A673 (cell line): ENCODE measurements at regions of chr3 and their contacts with region 1.

Region 1: GRCh38 chr3:114362815-114363214 is 69.0 kb downstream of the TIGIT start:
- DNase-seq: peak; percentile 69
- H3K4me3 ChIP-seq: no peak overlapping the region
- H3K27ac ChIP-seq: no peak overlapping the region
- H3K4me1 ChIP-seq: peaks cover 12% of the 10 kb centered on the region
- H3K27me3 ChIP-seq: no peaks in the 10 kb centered on the region
- CTCF ChIP-seq: peak; percentile 71

Region 2: DNA sequence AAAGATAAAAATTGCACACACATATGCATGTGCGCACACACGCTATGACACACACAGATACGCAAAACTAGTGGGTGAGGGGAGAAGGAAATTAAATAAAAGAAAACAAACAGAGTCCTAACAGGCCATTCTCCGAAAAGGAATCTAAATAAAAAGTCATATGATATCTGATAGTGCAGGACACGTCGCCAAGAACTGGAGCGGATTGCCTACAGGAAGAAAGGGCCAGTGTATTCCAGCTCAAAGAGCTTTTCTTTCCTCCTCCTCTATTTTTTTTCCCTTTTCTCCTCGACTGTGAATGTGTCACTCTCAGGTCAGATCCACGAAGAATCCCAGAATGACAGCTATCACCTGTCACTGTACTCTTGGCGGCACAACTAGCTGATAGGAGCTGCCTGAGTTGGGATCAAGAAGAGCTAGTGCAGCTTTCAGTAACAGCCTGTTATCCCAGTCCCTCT is 88.8 kb after region 1 on chr3:
- CTCF ChIA-PET with region 1: interaction called, 3 read pairs
- POLR2A ChIA-PET with region 1: no interaction called
- intact Hi-C with region 1: loop called (anchors 5 kb)
- DNase-seq: no peak
- H3K4me3 ChIP-seq: peak overlapping the region; percentile 58
- H3K27ac ChIP-seq: peak overlapping the region; percentile 83
- H3K4me1 ChIP-seq: peaks cover 67% of the 10 kb centered on the region
- H3K27me3 ChIP-seq: no peaks in the 10 kb centered on the region
- CTCF ChIP-seq: no peak

Region 3: DNA sequence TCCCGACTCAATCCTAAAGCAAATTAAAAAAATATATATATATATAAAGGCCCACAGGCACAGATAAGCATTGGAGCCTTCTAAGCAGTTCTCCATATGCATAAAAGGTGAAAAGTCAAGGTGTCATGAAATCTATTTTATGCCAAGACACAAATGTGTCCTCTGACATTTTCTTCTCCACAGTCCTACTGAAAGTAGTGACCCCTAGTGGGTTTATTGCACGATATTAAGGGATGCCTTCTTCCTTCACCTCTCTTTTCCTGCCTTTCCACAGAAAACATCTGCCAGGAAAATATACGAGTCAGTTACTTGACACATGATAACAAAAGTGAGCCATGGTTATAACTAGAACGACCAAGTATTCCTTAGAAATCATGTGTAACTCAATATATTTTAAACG is 234.2 kb after region 1 on chr3:
- CTCF ChIA-PET with region 1: no interaction called
- POLR2A ChIA-PET with region 1: no interaction called
- intact Hi-C with region 1: loop called (anchors 10 kb)
- DNase-seq: peak; percentile 15
- H3K4me3 ChIP-seq: no peak overlapping the region
- H3K27ac ChIP-seq: no peak overlapping the region
- H3K4me1 ChIP-seq: no peaks in the 10 kb centered on the region
- H3K27me3 ChIP-seq: no peaks in the 10 kb centered on the region
- CTCF ChIP-seq: peak; percentile 40

Region 4: GRCh38 chr3:114827495-114827894 is 464.7 kb after region 1 on chr3:
- CTCF ChIA-PET with region 1: no interaction called
- POLR2A ChIA-PET with region 1: no interaction called
- intact Hi-C with region 1: loop called (anchors 10 kb)
- DNase-seq: peak; percentile 61
- H3K4me3 ChIP-seq: no peak overlapping the region
- H3K27ac ChIP-seq: no peak overlapping the region
- H3K4me1 ChIP-seq: no peaks in the 10 kb centered on the region
- H3K27me3 ChIP-seq: no peaks in the 10 kb centered on the region
- CTCF ChIP-seq: peak; percentile 64

Region 5: GRCh38 chr3:115085197-115085865 is 722.5 kb after region 1 on chr3:
- CTCF ChIA-PET with region 1: no interaction called
- POLR2A ChIA-PET with region 1: no interaction called
- intact Hi-C with region 1: loop called (anchors 10 kb)
- DNase-seq: peak; percentile 28
- H3K4me3 ChIP-seq: no peak overlapping the region
- H3K27ac ChIP-seq: no peak overlapping the region
- H3K4me1 ChIP-seq: no peaks in the 10 kb centered on the region
- H3K27me3 ChIP-seq: no peaks in the 10 kb centered on the region
- CTCF ChIP-seq: peak; percentile 42